ENCODE measurements at regions of chr5 and their contacts with region 1.

Region 1: DNA sequence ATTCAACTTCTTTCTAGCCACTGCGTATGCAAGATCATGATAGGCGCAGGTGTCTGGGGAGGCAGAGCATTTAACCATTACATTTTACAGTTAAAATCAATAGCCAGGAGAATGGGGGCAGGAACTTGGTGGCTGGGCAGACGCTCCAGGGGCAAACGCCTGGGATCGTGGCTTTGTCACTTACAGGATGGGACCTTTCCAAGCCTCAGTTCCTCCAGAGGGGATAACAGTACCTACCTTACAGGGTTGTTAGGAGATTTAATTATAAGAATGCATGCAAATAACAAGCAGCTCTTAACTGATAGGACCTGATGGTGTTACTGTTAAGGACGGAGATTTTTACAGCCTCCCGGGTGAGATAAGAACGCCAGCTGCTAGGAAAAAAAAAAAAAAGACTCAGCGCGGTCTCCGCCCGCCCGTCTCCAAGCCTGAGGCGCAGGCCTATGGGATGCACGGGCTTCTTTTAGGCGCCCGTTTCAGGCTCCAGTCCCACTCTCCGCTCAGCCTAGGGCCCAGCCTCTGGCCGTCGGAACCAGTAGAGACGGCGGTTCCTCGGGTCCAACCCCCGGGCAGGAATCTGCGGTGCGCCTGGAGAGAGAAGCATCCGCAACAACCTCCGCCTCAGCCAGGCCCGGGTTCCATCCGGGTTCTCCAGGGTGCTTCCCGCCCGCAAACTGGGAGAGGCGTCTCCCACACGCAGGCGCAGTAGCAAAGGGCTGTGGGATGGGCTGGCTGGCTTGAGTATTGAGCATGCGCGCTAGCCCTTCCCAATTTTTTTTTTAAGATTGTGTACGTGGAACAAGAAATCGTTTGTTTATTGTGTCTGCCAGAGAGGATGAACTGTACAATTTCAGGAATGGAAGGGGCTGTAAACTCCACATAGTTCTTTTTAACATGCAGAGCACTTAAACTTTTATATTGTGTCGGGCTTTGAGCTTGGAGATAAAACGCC is at the start of gene FAM200C:
- DNase-seq: peak; percentile 59
- ATAC-seq: peak; percentile 92
- H3K4me3 ChIP-seq: peak within 1 kb of the TSS; percentile 75
- H3K27ac ChIP-seq: peak within 1 kb of the TSS; percentile 84
- H3K4me1 ChIP-seq: no peaks in the 10 kb centered on the region; the same call in 1 of the 2 replicates
- H3K27me3 ChIP-seq: no peaks in the 10 kb centered on the region
- CTCF ChIP-seq: no peak
- EP300 ChIP-seq: 0 out of 4 replicates have a peak, but pooled peaks of 1 of the 2 experiments have one; percentile 7
- POLR2A ChIP-seq: peak; percentile 89
- RAD21 ChIP-seq: no peak
- polyA plus RNA-seq, gene FAM200C: 1.0 to 1.2 TPM

Region 2: GRCh38 chr5:160434022-160434531 is 34.4 kb after region 1 on chr5:
- CTCF ChIA-PET with region 1: interaction called, 6 read pairs
- POLR2A ChIA-PET with region 1: interaction called, 10 read pairs
- RAD21 ChIA-PET with region 1: interaction called, 3 read pairs
- SMC1A ChIA-PET with region 1: interaction called, 11 read pairs
- in situ Hi-C with region 1: no loop called
- intact Hi-C with region 1: no loop called
- DNase-seq: peak; percentile 86
- ATAC-seq: peak; percentile 81
- H3K4me3 ChIP-seq: peak overlapping the region; percentile 56; the same call in 1 of the 2 replicates
- H3K27ac ChIP-seq: peak overlapping the region; percentile 26
- H3K4me1 ChIP-seq: peaks cover 31% of the 10 kb centered on the region
- H3K27me3 ChIP-seq: no peaks in the 10 kb centered on the region
- CTCF ChIP-seq: no peak
- EP300 ChIP-seq: peak; percentile 59 to 62; a peak in 2 of 4 replicates
- POLR2A ChIP-seq: peak; percentile 33; the same call in 1 of the 2 replicates
- RAD21 ChIP-seq: no peak

Measured in GM12878 (cell line).